SK-N-SH (cell line): ENCODE measurements at regions of chr22 and their contacts with region 1.

Region 1: DNA sequence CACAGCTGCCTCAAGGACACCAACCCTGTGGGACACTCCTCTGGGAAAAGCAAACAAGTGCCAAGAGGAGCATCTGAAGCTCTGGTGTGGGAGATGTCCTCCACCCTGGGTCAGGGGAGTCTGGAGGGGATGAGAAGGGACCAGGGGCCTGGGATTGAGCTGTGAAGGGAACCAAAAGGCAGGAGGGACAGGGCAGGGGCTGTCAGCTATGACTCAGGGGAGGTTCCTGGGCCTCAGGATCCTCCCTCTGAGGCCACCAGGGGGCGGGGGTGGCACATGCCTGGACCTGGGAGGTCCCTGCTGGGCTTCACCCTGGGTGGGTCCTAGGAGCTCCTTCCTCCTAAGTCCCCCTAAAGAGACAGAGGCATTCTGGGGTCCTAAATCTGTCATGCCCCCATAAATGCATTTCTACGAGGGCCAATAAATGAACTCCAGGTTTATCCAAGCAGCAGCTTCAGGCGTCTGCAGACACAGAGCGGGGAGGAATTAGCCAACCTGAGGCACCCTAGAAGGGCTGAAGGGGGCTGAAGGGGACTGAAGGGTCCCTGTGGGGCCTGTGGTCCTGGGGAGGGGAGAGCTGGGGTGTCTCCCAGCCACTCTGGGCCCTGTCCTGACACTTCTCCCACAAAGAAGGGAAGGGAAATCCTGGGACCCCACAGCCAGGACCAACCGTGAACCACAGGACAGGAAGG is 31.9 kb upstream of the IGLL5 start:
- DNase-seq: peak; percentile 68
- H3K4me3 ChIP-seq: no peak overlapping the region
- H3K27ac ChIP-seq: no peak overlapping the region
- H3K4me1 ChIP-seq: no peaks in the 10 kb centered on the region; a peak in 1 of 4 replicates
- H3K27me3 ChIP-seq: peaks cover 6% of the 10 kb centered on the region; the same call in 1 of the 2 replicates
- CTCF ChIP-seq: peak; percentile 55
- EP300 ChIP-seq: no peak
- RAD21 ChIP-seq: peak; percentile 60

Region 2: GRCh38 chr22:22817468-22818201 is 38.1 kb before region 1 on chr22:
- CTCF ChIA-PET with region 1: interaction called, 10 read pairs
- POLR2A ChIA-PET with region 1: no interaction called
- DNase-seq: no peak
- H3K4me3 ChIP-seq: no peak overlapping the region
- H3K27ac ChIP-seq: no peak overlapping the region
- H3K4me1 ChIP-seq: no peaks in the 10 kb centered on the region
- H3K27me3 ChIP-seq: no peaks in the 10 kb centered on the region
- CTCF ChIP-seq: peak; percentile 7; the same call in 1 of the 2 replicates
- EP300 ChIP-seq: no peak
- RAD21 ChIP-seq: no peak

Region 3: GRCh38 chr22:23368656-23369417 is 513.1 kb after region 1 on chr22:
- CTCF ChIA-PET with region 1: no interaction called
- POLR2A ChIA-PET with region 1: no interaction called
- DNase-seq: no peak
- H3K4me3 ChIP-seq: no peak overlapping the region
- H3K27ac ChIP-seq: no peak overlapping the region
- H3K4me1 ChIP-seq: no peaks in the 10 kb centered on the region
- H3K27me3 ChIP-seq: peaks cover 5% of the 10 kb centered on the region; the same call in 1 of the 2 replicates
- CTCF ChIP-seq: no peak
- EP300 ChIP-seq: no peak
- RAD21 ChIP-seq: no peak